PC-9 (cell line): ENCODE measurements at regions of chr6 and their contacts with region 1.

Region 1: GRCh38 chr6:37018198-37019064 is 13.0 kb downstream of the FGD2 start:
- DNase-seq: peak; percentile 81 to 84
- H3K4me3 ChIP-seq: no peak overlapping the region
- H3K27ac ChIP-seq: peak overlapping the region; percentile 67
- H3K4me1 ChIP-seq: peaks cover 48% of the 10 kb centered on the region
- H3K27me3 ChIP-seq: no peaks in the 10 kb centered on the region
- CTCF ChIP-seq: peak; percentile 90

Region 2: DNA sequence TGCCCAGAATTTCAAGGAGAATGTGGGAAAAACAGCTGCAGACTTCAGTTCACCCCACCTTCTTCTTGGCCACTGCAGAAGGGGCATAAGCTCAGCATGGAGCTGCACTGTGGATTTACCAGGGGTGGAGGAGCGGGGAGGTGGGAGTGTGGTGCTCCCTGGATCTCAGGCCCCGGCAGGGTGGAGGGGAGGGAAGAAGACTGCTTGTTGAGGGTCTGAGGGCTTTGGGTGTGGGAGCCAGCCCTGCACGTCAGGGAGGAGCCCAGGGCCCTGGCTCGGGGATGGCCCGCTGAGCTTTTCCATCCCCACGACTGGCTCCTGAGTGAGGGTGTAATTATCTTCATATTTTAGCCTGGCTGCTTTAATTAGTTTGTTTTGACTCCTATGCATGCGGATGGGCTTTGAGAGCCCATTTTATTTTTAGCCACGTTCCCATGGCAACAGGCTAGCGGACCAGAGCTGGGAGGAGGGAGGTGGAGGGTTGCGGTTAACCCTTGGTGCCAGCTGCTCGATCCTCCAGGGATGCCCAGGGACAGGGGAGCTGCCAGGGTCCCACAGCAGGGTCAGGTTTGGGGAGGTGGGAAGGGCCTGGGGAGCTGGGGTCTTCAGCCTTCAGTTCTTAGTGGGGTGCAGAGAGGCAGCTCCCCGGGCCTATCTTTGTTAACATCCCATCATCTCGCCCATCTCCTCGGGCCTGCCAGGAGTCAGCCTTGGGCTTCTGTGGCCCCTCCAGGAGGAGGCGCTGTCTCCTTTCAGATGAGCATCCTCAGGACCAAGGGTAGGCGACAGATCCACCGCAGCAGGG is 252.6 kb before region 1 on chr6:
- CTCF ChIA-PET with region 1: interaction called, 14 read pairs
- POLR2A ChIA-PET with region 1: no interaction called
- intact Hi-C with region 1: loop called (anchors 1 kb)
- DNase-seq: peak; percentile 50 to 78
- H3K4me3 ChIP-seq: no peak overlapping the region
- H3K27ac ChIP-seq: no peak overlapping the region
- H3K4me1 ChIP-seq: peaks cover 24% of the 10 kb centered on the region
- H3K27me3 ChIP-seq: no peaks in the 10 kb centered on the region
- CTCF ChIP-seq: peak; percentile 92

Region 3: DNA sequence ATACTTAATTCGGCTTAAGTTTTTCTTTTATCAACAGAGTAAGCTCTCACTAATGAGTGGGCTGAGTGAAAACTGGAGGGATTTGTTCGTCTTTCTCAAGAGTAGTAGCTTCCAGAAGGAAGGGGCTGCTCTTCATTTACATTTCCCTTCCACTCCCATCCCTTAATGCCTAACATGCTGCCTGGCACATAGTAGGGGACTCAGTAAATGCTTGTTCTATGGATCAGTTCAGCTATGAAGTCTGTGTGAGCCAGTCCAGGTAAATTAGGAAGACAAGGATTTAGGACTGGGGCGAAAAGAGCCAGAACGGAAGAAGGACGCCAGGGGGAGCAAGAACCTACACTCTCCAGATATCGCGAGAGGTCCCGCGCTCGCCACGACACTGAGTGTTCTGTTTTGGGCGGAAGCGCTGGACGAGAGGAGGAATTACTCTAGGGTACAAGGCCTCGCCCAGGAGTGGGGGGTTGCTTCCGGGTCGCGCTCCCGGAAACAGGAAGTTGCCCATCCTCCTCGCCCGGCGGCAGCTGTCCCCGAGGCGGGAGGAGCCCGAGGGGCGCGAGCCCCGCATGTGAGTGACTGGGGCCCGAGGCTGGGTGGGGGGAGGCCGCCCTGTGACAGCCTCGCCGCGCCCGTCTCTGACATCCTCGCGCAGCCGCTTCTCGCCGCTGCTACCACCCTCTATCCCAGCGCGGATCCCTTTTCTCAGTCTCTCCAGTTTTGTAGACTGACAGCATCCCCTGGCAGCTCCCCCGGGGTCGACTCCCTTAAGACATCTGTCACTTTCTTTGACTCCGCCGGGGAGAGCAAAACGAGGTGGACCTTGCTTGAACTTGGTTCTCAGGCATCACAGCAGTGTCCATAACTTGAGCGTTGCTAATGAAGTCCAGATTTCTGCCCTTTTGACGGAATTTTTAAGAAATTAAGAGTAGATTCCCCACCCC is 132.7 kb before region 1 on chr6 and contains the start of gene C6orf89:
- CTCF ChIA-PET with region 1: interaction called, 20 read pairs
- POLR2A ChIA-PET with region 1: interaction called, 10 read pairs
- intact Hi-C with region 1: loop called (anchors 1 kb)
- DNase-seq: peak; percentile 91 to 92
- H3K4me3 ChIP-seq: peak within 1 kb of the TSS; percentile 67
- H3K27ac ChIP-seq: peak within 1 kb of the TSS; percentile 61
- H3K4me1 ChIP-seq: peaks cover 19% of the 10 kb centered on the region
- H3K27me3 ChIP-seq: no peaks in the 10 kb centered on the region
- CTCF ChIP-seq: peak; percentile 75
- total RNA-seq, gene C6orf89: 28.7 and 40.1 TPM in 2 replicates

Region 4: DNA sequence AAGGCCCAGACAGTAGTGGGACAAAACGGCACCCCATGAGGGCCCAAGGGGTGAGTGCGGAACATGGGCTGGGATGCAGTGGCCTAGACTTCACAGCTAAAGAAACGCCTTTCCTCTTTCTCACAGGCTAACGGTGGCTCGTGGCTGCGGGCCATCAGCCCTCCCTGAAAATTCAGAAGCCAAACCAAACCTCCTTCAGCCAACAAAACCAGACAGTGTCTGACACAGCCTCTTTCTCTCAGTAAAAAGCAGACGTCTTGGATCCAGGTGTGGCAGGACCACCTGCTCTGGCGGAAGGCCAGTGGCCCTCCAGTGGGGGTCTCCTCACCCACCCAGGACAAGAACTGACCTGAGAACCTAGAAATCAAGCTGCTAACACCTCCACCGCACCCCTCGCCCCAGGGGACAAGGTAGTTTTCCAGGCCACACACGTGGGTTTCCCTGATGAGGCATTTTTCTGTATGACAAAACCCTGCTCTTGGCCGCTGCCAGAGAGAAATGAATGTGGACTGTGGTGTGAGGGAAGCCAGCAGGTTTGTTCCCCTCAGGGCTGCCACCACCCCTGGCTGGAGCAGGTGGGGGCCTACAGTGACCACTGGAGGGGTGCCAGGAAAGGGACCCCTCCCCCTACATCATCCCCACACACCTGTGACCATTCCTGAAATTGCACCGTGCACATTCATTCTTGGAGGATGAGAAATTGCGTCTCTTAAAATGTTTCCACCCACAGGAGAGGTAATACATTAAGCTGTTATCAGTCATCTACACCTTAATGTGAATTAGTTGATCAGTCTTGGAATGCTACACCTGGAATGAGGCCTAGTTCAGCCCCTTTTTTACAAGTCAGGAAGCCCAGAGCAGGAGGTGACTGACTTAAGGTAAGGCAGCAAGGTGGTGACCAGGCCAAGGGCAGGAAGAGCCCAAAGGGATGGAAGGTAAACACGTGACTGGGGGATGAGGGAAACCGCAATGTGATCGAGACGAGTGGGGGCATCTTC is 74.8 kb after region 1 on chr6:
- CTCF ChIA-PET with region 1: no interaction called
- POLR2A ChIA-PET with region 1: no interaction called
- intact Hi-C with region 1: loop called (anchors 5 kb)
- DNase-seq: peak; percentile 95 to 99
- H3K4me3 ChIP-seq: peak overlapping the region; percentile 15; the same call in 1 of the 2 replicates
- H3K27ac ChIP-seq: peak overlapping the region; percentile 93
- H3K4me1 ChIP-seq: peaks cover 50% of the 10 kb centered on the region
- H3K27me3 ChIP-seq: no peaks in the 10 kb centered on the region
- CTCF ChIP-seq: no peak

Region 5: GRCh38 chr6:37207903-37208456 is 189.5 kb after region 1 on chr6:
- CTCF ChIA-PET with region 1: interaction called, 45 read pairs
- POLR2A ChIA-PET with region 1: no interaction called
- intact Hi-C with region 1: loop called (anchors 1 kb)
- DNase-seq: peak; percentile 68 to 84
- H3K4me3 ChIP-seq: no peak overlapping the region
- H3K27ac ChIP-seq: no peak overlapping the region
- H3K4me1 ChIP-seq: peaks cover 33% of the 10 kb centered on the region
- H3K27me3 ChIP-seq: no peaks in the 10 kb centered on the region
- CTCF ChIP-seq: peak; percentile 91